Psoas muscle (tissue), 8 donors: ENCODE measurements at regions of chr1 and their contacts with region 1.

Region 1: GRCh38 chr1:221035680-221036153 is 156.5 kb downstream of the HLX start:
- DNase-seq: no peak
- ATAC-seq: peak; percentile 87 to 96 (median 94)
- H3K4me3 ChIP-seq: peak overlapping the region; percentile 31
- H3K27ac ChIP-seq: peak overlapping the region; percentile 76
- H3K4me1 ChIP-seq: peaks cover 31% of the 10 kb centered on the region
- H3K27me3 ChIP-seq: no peaks in the 10 kb centered on the region
- CTCF ChIP-seq: no peak

Region 2: GRCh38 chr1:220879076-220879508 is 156.6 kb before region 1 on chr1 and contains the start of gene HLX:
- intact Hi-C with region 1: loop called in 1 of 2 experiments (anchors 2 kb)
- DNase-seq: peak; percentile 91 to 95
- ATAC-seq: peak; percentile 92 to 95 (median 94)
- H3K4me3 ChIP-seq: peak within 1 kb of the TSS; percentile 100
- H3K27ac ChIP-seq: peak within 1 kb of the TSS; percentile 90
- H3K4me1 ChIP-seq: peaks cover 13% of the 10 kb centered on the region
- H3K27me3 ChIP-seq: no peaks in the 10 kb centered on the region
- CTCF ChIP-seq: no peak
- total RNA-seq, gene HLX: 4.1 to 11.6 (median 7.3) TPM

Region 3: DNA sequence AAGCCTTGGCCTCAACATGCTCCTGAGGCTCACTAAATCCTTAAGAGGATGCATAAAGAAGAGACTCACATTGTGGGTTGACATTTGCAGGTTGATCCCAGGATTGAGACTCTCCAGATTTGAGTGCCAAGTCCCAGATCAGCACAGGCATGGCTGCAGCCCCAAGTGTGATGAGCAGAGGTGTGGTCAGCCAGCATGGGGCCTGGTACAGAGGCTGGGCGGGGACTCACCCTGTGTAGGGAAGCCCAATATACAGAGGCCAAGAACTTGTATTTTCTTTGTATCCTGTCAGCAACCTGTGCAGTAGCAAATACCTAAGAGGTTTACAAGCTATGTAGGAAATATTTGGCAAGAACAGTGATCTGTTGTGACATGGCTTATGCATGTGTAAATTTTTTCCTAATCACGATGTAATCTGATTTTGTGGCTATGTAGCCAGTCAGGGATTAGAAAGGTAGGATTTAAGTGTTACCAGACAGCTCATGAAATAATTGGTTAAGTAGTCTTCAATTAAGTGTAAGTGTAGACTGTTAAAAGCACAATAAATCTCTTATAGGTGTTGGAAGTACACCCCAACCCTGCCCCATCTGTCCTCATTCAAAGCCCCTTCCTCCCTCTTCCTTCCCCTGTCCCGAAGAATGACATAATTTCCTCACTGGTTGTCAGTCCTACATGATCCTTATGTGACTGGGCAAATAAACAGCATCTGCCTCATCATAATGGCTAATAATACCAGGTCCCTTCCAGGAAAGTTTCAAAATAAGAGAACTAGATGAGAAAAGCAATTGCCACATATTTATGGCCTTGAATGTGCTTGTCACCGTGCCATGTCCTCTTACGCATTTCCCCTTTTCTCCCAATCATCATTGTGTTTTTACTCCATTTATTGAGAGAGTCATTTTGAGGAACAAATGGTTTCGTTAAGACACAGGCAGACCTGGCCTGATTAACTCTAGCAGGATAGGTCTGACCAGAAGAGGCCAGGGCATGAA is 35.5 kb before region 1 on chr1:
- intact Hi-C with region 1: no loop called
- DNase-seq: peak in 1 of 2 donors; percentile 20
- ATAC-seq: peak; percentile 30 to 57 (median 52)
- H3K4me3 ChIP-seq: no peak overlapping the region
- H3K27ac ChIP-seq: peak overlapping the region; percentile 46
- H3K4me1 ChIP-seq: no peaks in the 10 kb centered on the region
- H3K27me3 ChIP-seq: peaks cover 0 to 1% (median 0%) of the 10 kb centered on the region in 3 donors
- CTCF ChIP-seq: no peak